ENCODE measurements at regions of chr13 and their contacts with region 1.

Region 1: DNA sequence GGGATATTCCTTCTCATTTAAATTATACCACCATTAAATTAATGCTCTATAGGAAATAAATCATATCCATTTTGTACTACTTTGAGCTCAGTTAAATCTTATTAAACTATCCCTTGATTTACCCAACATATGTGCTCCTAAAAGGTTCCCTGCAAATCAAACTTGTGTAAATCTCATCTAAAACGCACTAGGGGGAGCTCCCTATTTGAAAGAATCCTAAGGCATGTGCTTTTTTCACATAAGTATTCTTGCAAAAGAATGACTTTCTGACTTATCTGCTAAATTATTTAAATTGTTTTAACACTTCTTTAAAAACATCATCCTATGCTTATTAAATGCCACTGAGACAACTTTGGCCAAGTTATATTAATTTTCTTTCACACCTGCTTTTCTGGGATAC is 7.9 kb downstream of the INTS6 start:
- DNase-seq: peak; percentile 68
- ATAC-seq: no peak; the same call in 1 of the 2 replicates
- H3K4me3 ChIP-seq: no peak overlapping the region
- H3K27ac ChIP-seq: no peak overlapping the region
- H3K4me1 ChIP-seq: no peaks in the 10 kb centered on the region
- H3K27me3 ChIP-seq: no peaks in the 10 kb centered on the region
- CTCF ChIP-seq: peak; percentile 55
- POLR2A ChIP-seq: no peak
- RAD21 ChIP-seq: peak; percentile 63

Region 2: GRCh38 chr13:51364404-51365008 is 80.4 kb before region 1 on chr13:
- CTCF ChIA-PET with region 1: no interaction called
- POLR2A ChIA-PET with region 1: no interaction called
- dilution Hi-C with region 1: no loop called
- in situ Hi-C with region 1: no loop called
- intact Hi-C with region 1: no loop called
- DNase-seq: peak; percentile 79
- ATAC-seq: peak; percentile 97
- H3K4me3 ChIP-seq: no peak overlapping the region
- H3K27ac ChIP-seq: no peak overlapping the region
- H3K4me1 ChIP-seq: no peaks in the 10 kb centered on the region; the same call in 1 of the 2 replicates
- H3K27me3 ChIP-seq: no peaks in the 10 kb centered on the region
- CTCF ChIP-seq: no peak
- POLR2A ChIP-seq: no peak
- RAD21 ChIP-seq: no peak

Region 3: DNA sequence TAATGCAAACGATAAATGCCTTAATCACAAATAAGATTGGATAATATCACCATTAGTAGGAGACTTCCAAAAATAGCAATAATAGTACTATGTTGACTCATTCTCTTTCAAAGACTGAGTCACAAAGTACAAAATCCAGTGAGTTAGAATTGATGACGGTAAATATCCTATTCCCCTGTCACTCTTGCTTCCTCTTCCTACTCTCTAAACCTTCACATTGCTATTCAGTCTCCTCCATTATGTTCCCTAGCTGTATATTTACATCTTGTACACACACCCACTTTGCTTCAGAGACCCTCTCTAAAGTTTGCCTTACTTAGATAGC is 34.2 kb after region 1 on chr13:
- CTCF ChIA-PET with region 1: no interaction called
- POLR2A ChIA-PET with region 1: no interaction called
- dilution Hi-C with region 1: no loop called
- in situ Hi-C with region 1: no loop called
- intact Hi-C with region 1: no loop called
- DNase-seq: peak; percentile 71
- ATAC-seq: peak; percentile 75
- H3K4me3 ChIP-seq: no peak overlapping the region
- H3K27ac ChIP-seq: no peak overlapping the region
- H3K4me1 ChIP-seq: peaks cover 10% of the 10 kb centered on the region
- H3K27me3 ChIP-seq: no peaks in the 10 kb centered on the region
- CTCF ChIP-seq: no peak
- POLR2A ChIP-seq: no peak
- RAD21 ChIP-seq: no peak

Region 4: DNA sequence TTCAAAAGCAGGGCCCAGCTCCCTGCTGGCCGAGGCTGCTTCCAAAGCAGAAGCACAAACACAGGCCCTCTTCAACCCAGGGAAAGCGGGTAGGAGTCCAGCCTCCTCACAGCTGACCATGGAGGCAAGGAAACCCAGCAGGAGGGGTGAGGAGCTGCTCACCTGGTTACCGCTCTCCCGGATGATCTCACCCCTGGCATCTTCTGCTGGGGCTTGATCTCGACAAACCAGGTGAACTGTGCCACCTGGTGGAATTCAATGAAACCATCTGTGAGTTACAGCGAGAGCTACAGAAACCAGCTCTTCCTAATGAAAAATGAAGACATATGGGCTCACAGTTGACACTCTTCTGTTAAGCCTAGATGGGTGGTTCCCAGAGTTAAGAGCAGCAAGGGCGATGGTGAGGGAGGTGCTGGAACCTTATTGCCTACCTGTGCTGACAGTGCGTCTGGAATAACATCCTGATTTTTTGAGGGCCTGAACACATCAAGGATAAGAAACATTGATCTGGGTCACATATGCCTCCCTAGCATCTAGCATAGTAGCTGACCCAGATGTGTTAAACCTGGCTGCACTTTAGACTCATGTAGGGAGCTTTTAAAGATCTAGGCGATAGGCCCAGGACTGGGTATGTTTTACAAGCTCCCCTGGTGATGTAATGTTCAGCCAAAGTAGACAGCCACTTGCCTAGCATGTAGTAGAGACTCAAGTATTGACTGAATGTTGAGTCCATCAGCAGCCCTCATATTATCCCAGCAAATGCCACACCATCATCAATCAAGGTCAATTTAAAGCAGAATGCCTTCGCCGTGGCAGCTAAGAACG is 353.0 kb after region 1 on chr13:
- CTCF ChIA-PET with region 1: interaction called, 6 read pairs
- POLR2A ChIA-PET with region 1: no interaction called
- dilution Hi-C with region 1: no loop called
- in situ Hi-C with region 1: loop called (anchors 5 kb)
- intact Hi-C with region 1: loop called (anchors 5 kb)
- DNase-seq: peak; percentile 69
- ATAC-seq: peak; percentile 18; the same call in 1 of the 2 replicates
- H3K4me3 ChIP-seq: no peak overlapping the region
- H3K27ac ChIP-seq: no peak overlapping the region
- H3K4me1 ChIP-seq: peaks cover 9% of the 10 kb centered on the region
- H3K27me3 ChIP-seq: no peaks in the 10 kb centered on the region
- CTCF ChIP-seq: peak; percentile 66
- POLR2A ChIP-seq: no peak
- RAD21 ChIP-seq: peak; percentile 79

Region 5: DNA sequence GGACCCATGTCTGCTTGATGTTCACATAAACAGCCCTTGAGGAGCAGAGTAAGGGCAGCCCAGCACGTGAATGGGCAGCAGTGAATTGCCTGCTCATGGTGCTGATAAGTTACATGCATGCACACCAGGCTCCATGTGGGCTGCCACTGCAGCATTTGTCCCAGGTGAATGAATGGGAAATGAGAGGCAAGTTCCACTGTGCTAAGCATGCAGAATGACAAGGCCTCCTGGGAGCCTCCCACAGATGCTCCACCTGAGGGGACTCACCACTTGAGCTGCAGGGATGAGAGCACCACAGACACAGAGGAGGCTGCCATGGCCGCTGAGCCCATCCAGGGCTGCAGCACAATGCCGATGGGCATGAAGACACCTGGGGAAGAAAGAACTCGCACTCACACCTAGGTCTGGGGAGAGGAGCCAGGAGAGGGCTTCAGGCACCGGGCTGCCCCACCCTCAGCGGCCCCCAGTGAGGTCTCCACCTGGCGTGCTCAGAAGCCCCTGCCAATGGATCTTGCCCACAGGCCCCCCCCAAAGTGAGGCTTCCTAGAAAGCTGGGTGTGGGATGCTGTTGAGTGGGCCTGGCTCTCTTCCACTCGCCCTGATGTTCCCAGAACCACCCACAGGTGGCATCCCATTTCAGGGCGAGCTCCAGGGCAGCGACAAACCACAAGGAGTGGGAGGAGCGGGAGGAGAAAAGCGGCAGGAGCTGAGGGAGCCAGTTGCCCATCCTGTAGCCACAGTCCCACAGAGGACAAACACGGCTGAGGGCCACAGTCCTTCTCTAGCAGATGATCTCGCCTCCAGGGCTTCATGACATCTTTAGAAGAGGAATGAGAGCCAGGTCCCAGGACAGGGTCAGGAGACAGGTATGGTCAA is 490.6 kb after region 1 on chr13:
- CTCF ChIA-PET with region 1: no interaction called
- POLR2A ChIA-PET with region 1: no interaction called
- dilution Hi-C with region 1: no loop called
- in situ Hi-C with region 1: no loop called
- intact Hi-C with region 1: no loop called
- DNase-seq: no peak
- ATAC-seq: 0 out of 2 replicates have a peak, but pooled peaks have one; percentile 35
- H3K4me3 ChIP-seq: no peak overlapping the region
- H3K27ac ChIP-seq: no peak overlapping the region
- H3K4me1 ChIP-seq: no peaks in the 10 kb centered on the region
- H3K27me3 ChIP-seq: no peaks in the 10 kb centered on the region
- CTCF ChIP-seq: peak; percentile 14; the same call in 1 of the 2 replicates
- POLR2A ChIP-seq: no peak
- RAD21 ChIP-seq: 0 out of 2 replicates have a peak, but pooled peaks have one; percentile 10